H1 (cell line): ENCODE measurements at regions of chr21 and their contacts with region 1.

Region 1: DNA sequence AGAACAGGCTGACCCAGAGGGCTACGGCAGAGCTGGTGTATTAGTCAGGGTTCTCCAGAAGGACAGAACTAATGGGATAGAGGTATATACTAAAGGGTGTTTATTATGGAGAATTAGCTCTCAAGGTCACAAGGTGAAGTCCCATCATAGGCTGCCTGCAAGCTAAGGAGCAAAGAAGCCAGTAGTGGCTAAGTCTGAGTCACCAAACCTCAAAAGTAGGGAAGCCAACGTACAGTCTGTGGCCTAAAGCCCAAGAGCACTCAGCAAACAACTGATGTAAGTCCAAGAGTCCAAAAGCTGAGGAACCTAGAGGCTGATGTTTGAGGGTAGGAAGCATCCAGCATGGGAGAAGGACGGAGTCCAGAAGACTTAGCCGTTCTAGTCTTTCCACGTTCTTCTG is 179.2 kb downstream of the BACH1 start:
- DNase-seq: no peak
- H3K4me3 ChIP-seq: no peak overlapping the region
- H3K27ac ChIP-seq: no peak overlapping the region
- H3K4me1 ChIP-seq: 0 out of 7 replicates have a peak, but pooled peaks cover 0 to 3% (median 0%) of the 10 kb centered on the region in 4 experiments
- H3K27me3 ChIP-seq: no peaks in the 10 kb centered on the region
- CTCF ChIP-seq: no peak
- EP300 ChIP-seq: no peak
- POLR2A ChIP-seq: no peak
- RAD21 ChIP-seq: no peak

Region 2: DNA sequence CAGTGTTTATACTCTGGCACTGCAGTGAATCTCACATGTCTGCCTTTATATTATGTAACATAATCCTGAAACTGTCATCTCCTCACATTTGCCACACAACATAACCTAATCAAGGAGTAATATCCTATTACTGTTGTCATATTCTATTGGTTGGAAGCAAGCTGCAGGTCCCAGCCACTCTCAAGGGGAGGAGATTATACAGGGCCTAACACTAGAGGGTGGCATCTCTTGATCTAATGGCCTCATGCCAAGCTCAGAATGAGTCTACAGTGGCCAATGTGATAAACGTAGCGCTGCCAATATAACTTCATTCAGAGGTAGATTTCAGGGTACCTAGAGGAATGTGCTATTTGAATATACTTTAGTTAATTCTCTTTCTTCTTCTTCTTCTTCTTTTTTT is 12.4 kb before region 1 on chr21:
- CTCF ChIA-PET with region 1: interaction called, 11 read pairs
- POLR2A ChIA-PET with region 1: no interaction called
- DNase-seq: no peak
- H3K4me3 ChIP-seq: no peak overlapping the region
- H3K27ac ChIP-seq: no peak overlapping the region
- H3K4me1 ChIP-seq: no peaks in the 10 kb centered on the region
- H3K27me3 ChIP-seq: no peaks in the 10 kb centered on the region
- CTCF ChIP-seq: no peak
- EP300 ChIP-seq: no peak
- POLR2A ChIP-seq: no peak
- RAD21 ChIP-seq: no peak

Region 3: DNA sequence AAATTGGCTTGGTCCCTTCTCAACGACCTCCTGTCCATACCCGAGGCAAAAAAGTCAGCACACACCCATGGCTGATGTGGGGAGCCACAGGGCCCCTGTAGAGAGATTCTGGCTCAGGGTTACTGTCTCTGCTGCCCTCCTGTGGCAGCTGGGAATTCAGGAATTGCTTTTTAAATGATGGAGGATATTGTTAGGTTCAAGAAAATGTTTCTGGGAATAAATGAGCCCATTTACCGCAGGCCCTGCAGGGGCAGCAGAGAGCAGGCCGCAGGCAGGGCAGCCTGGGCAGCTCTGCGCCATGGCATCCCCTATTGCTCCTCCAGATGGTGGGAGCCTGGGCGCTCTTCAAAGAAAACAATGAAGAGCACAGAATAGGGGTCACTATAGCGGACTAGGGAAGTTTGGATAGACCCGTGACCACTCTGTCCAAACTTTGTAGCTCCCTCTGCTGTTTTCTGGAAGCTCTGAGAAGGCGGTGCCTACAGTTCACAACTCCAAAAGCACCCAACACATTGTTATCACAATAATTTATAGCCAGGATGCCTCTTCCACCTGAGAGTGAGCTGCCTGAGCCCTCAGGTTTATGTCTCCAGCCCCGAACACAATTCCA is 21.9 kb after region 1 on chr21:
- CTCF ChIA-PET with region 1: interaction called, 17 read pairs
- POLR2A ChIA-PET with region 1: no interaction called
- DNase-seq: peak; percentile 63 to 78
- H3K4me3 ChIP-seq: no peak overlapping the region
- H3K27ac ChIP-seq: no peak overlapping the region
- H3K4me1 ChIP-seq: no peaks in the 10 kb centered on the region
- H3K27me3 ChIP-seq: no peaks in the 10 kb centered on the region
- CTCF ChIP-seq: peak; percentile 82 to 93 (median 93)
- EP300 ChIP-seq: no peak
- POLR2A ChIP-seq: no peak
- RAD21 ChIP-seq: peak in 1 of 2 experiments; percentile 82

Region 4: GRCh38 chr21:29511096-29511495 is 33.2 kb after region 1 on chr21:
- CTCF ChIA-PET with region 1: no interaction called
- POLR2A ChIA-PET with region 1: no interaction called
- DNase-seq: no peak
- H3K4me3 ChIP-seq: no peak overlapping the region
- H3K27ac ChIP-seq: no peak overlapping the region
- H3K4me1 ChIP-seq: no peaks in the 10 kb centered on the region
- H3K27me3 ChIP-seq: no peaks in the 10 kb centered on the region
- CTCF ChIP-seq: no peak
- EP300 ChIP-seq: no peak
- POLR2A ChIP-seq: no peak
- RAD21 ChIP-seq: no peak

Region 5: DNA sequence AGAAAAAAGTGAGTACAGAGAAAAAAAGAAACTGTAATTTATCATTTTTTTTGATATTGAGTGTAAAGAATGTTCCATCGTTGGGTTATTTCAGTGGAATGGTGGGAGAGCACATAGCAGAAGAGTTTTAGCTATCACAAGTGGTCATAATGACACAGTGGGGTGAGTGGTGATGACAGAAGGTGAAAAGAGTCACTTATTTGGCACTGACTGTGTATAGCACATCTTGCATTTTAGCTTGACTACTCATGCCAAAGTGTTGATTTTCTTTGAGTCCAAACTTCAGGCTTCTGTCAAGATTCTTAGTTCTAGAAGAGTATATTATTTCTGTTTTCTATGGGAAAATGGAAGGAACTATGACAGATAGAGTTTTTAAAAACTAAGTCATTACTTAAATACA is 200.7 kb after region 1 on chr21:
- CTCF ChIA-PET with region 1: no interaction called
- POLR2A ChIA-PET with region 1: no interaction called
- DNase-seq: no peak
- H3K4me3 ChIP-seq: no peak overlapping the region
- H3K27ac ChIP-seq: no peak overlapping the region
- H3K4me1 ChIP-seq: peaks cover 1 to 10% (median 3%) of the 10 kb centered on the region in 4 experiments; a peak in 6 of 7 replicates
- H3K27me3 ChIP-seq: no peaks in the 10 kb centered on the region
- CTCF ChIP-seq: no peak
- EP300 ChIP-seq: no peak
- POLR2A ChIP-seq: no peak
- RAD21 ChIP-seq: no peak

Region 6: DNA sequence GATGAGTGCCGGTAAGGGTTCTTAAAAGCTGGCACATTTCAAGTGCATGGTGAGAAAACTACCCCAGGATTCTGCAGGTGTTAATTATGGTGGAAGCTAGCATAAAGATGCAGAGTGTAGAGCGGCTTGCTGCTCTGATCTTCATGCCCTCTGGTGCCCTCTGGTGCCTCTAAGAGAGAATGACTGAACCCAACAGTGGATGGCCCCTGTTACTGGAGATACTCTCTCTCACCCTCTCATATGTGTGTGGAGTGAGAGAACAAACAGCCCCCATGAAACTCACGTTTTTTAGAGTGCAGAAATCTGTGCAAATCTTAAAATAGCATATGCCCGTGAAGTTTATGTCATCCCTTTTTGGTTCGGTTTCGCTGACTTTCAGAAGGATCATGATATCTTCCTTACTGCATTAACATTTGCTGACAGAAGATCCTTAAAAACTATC is 371.8 kb after region 1 on chr21:
- CTCF ChIA-PET with region 1: interaction called, 24 read pairs
- POLR2A ChIA-PET with region 1: no interaction called
- DNase-seq: peak; percentile 33 to 55
- H3K4me3 ChIP-seq: no peak overlapping the region
- H3K27ac ChIP-seq: no peak overlapping the region
- H3K4me1 ChIP-seq: no peaks in the 10 kb centered on the region; a peak in 2 of 7 replicates
- H3K27me3 ChIP-seq: no peaks in the 10 kb centered on the region
- CTCF ChIP-seq: peak; percentile 62 to 85 (median 75)
- EP300 ChIP-seq: no peak
- POLR2A ChIP-seq: no peak
- RAD21 ChIP-seq: peak; percentile 89 to 90